ENCODE measurements at regions of chr2 and their contacts with region 1.

Region 1: GRCh38 chr2:20962939-20963557 is 80.8 kb downstream of the APOB start:
- DNase-seq: peak; percentile 84
- H3K4me3 ChIP-seq: no peak overlapping the region
- H3K27ac ChIP-seq: no peak overlapping the region
- H3K4me1 ChIP-seq: no peaks in the 10 kb centered on the region
- H3K27me3 ChIP-seq: no peaks in the 10 kb centered on the region
- CTCF ChIP-seq: peak; percentile 72 to 88 (median 86)
- POLR2A ChIP-seq: no peak

Region 2: DNA sequence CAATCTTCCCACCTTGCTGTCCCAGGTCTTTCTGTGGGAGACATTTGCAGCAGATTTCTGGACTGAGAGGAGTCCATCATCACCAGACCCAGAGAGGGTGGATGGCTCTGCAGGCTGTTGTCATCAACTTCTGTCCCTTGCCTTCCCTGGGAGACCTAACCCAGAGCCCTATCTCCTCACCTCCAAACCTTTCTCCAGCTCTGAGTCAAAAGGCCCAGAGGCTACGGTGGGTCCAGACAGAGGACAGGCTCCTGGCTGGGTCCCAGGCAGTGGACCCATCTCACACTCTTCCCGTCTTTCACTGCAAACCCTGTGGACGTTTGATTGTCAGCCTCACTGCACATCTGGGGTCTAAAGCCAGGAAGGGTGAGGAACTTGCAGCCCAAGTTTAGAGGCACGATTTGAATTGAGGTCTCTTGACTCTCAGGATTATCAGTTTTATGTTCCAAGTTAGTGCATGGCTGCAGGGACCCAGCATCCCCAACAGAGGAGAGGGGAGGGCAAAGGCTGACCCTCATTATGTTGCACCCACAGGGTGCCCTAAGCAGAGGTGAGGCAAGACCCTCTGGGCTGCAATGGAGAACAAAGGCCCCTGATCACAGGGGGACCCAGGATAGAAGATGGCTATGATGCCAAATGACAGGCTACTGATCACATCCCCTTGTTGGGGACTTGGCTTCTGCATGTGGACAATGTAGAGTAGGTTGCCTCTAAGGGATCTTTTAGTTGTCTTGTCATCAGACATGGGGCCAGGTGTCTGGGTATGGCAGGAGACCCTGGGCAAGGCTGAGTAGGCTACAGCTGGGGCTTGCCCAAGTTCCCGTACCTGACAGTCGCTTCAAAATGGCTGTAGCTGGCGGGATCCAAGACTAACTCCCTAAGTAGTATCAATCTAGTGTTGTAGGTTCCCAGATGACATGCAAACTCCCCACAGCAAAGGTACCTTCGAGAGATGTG is 300.8 kb before region 1 on chr2:
- intact Hi-C with region 1: loop called (anchors 2 kb)
- DNase-seq: no peak
- H3K4me3 ChIP-seq: no peak overlapping the region
- H3K27ac ChIP-seq: no peak overlapping the region
- H3K4me1 ChIP-seq: peaks cover 14% of the 10 kb centered on the region
- H3K27me3 ChIP-seq: no peaks in the 10 kb centered on the region
- CTCF ChIP-seq: no peak
- POLR2A ChIP-seq: no peak

Region 3: GRCh38 chr2:20877960-20878359 is 85.1 kb before region 1 on chr2:
- intact Hi-C with region 1: no loop called
- DNase-seq: no peak
- H3K4me3 ChIP-seq: no peak overlapping the region
- H3K27ac ChIP-seq: no peak overlapping the region
- H3K4me1 ChIP-seq: no peaks in the 10 kb centered on the region
- H3K27me3 ChIP-seq: no peaks in the 10 kb centered on the region
- CTCF ChIP-seq: no peak
- POLR2A ChIP-seq: no peak

Measured in testis (tissue), 5 donors.